ENCODE measurements at regions of chr13 and their contacts with region 1.

Region 1: DNA sequence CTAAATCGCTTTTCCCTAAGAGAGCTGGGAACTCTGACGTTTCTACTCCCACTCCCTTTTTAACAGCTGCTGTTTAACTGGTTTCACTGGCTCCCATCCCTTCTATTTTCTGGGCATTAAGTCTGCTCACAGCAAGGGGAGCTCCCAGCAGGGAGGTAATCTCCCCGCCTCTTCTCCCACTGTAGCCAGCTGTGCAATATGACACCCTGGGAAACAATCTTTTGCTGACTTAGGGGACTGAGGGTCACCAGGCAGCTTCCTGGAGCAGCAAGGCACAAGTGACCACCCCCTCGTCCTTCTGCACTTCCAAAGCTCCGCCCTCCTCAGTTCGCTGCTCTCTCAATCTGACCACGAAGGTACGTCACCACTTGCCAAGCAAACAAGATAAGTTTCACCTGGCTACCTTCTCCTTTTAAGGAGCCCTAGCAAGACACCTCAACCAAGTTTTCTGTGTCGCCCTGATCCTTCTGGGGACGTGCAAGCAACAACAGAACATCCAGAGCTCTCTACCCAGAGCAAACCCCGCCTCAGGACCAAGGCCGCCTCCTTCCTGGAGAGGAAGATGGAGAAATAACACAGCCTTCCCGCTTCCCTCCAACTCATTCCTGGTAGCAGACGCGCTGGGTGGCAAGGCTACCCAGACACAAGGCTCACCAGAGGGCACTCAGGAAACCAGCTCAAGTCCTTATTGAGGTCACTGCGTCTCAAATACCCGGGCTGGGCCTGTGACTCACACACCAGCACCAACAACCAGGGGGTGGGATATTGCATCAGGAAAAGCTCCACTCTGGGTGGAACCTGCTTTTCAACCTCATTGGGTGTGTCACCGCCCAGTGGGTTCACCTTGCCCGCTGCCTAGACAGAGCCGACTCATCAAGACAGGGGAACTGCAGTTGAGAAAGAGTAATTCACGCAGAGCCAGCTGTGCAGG is 92.4 kb downstream of the STK24 start:
- DNase-seq: peak; percentile 71
- ATAC-seq: peak; percentile 80
- H3K4me3 Mint-ChIP-seq: peak overlapping the region; percentile 50
- H3K27ac Mint-ChIP-seq: peak overlapping the region; percentile 93
- H3K4me1 Mint-ChIP-seq: peaks cover 89% of the 10 kb centered on the region
- H3K27me3 Mint-ChIP-seq: no peaks in the 10 kb centered on the region
- CTCF ChIP-seq: no peak

Region 2: DNA sequence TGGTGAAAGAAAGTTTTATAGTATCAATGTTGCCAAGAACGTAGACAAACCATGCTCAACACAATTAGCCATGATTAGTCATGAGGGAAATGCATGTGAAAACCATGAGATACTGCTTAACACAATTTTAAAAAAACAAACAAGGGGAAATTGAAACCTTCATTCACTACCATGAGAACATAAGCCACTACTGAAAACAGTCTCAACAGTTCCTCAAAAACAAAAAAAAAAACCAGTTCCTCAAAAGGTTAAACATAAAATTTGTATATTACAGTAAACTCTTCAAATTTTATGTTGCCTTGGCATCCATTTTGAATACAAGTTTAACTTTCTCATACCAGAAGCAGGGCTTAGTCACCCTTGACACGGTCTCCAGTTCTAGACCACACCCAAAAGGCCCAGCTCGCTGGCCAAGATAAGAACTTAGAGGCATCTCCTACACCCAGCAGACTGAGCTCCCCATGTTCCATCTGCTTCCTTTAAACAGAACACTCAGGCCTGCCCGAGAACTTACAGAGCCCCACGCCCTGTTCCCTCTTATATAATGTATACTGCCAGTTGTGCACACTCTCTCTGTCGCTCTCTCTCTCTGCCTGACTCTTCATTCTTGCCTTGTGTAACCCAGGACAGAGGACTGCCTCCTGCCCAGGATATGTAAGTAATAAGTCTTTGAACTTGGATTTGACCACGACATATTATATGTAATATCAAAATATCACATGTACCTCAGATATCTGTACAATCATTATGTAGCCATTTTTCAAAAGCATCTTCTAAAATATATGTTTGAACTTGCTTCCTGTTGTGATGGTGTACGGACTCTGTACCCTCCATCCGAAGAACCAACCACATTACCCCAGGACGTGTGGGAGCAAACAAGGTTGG is 25.0 kb after region 1 on chr13:
- CTCF ChIA-PET with region 1: interaction called, 20 read pairs
- POLR2A ChIA-PET with region 1: interaction called, 4 read pairs
- DNase-seq: no peak
- ATAC-seq: no peak
- H3K4me3 Mint-ChIP-seq: no peak overlapping the region
- H3K27ac Mint-ChIP-seq: peak overlapping the region; percentile 46; the same call in 1 of the 2 replicates
- H3K4me1 Mint-ChIP-seq: peaks cover 65% of the 10 kb centered on the region
- H3K27me3 Mint-ChIP-seq: no peaks in the 10 kb centered on the region
- CTCF ChIP-seq: no peak

Region 3: DNA sequence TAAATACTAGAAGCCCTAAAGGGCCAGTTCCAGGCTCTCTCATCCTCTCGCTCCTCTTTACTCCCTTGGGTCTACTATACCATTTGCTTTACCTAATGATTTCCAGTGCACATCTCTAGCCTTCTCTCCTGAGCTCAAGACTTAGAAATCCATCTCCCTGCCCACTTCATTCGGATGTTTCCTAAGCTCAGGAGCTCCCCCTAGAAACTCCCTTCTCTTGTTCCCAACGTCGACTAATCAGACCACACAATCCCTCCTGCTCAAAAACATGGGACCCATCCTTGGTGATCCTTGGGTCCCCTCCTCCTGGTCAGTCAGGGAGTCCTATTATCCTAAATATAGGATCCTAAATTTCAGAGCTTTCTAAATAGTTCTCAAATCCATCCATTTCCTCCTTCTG is 113.5 kb after region 1 on chr13:
- CTCF ChIA-PET with region 1: interaction called, 17 read pairs
- POLR2A ChIA-PET with region 1: no interaction called
- DNase-seq: no peak
- ATAC-seq: peak; percentile 87
- H3K4me3 Mint-ChIP-seq: no peak overlapping the region
- H3K27ac Mint-ChIP-seq: no peak overlapping the region
- H3K4me1 Mint-ChIP-seq: peaks cover 5% of the 10 kb centered on the region
- H3K27me3 Mint-ChIP-seq: no peaks in the 10 kb centered on the region
- CTCF ChIP-seq: no peak

Measured in WTC11 (cell line).